HepG2 (cell line): ENCODE measurements at regions of chr2 and their contacts with region 1.

Region 1: GRCh38 chr2:128520791-128521190 is 202.1 kb upstream of the HS6ST1 start:
- DNase-seq: no peak
- ATAC-seq: peak; percentile 33
- H3K4me3 ChIP-seq: no peak overlapping the region
- H3K27ac ChIP-seq: no peak overlapping the region
- H3K4me1 ChIP-seq: no peaks in the 10 kb centered on the region
- H3K27me3 ChIP-seq: peaks cover 3 to 34% of the 10 kb centered on the region in 2 experiments; a peak in 3 of 5 replicates
- CTCF ChIP-seq: no peak
- EP300 ChIP-seq: no peak
- POLR2A ChIP-seq: no peak
- RAD21 ChIP-seq: no peak

Region 2: GRCh38 chr2:127231130-127231865 is 1289.5 kb before region 1 on chr2:
- CTCF ChIA-PET with region 1: no interaction called
- POLR2A ChIA-PET with region 1: no interaction called
- in situ Hi-C with region 1: no loop called
- intact Hi-C with region 1: loop called (anchors 5 kb)
- DNase-seq: peak; percentile 70
- ATAC-seq: peak; percentile 98
- H3K4me3 ChIP-seq: no peak overlapping the region
- H3K27ac ChIP-seq: no peak overlapping the region
- H3K4me1 ChIP-seq: peaks cover 22% of the 10 kb centered on the region
- H3K27me3 ChIP-seq: peaks cover 0 to 4% of the 10 kb centered on the region in 2 experiments; a peak in 3 of 5 replicates
- CTCF ChIP-seq: no peak
- EP300 ChIP-seq: no peak
- POLR2A ChIP-seq: no peak
- RAD21 ChIP-seq: no peak

Region 3: DNA sequence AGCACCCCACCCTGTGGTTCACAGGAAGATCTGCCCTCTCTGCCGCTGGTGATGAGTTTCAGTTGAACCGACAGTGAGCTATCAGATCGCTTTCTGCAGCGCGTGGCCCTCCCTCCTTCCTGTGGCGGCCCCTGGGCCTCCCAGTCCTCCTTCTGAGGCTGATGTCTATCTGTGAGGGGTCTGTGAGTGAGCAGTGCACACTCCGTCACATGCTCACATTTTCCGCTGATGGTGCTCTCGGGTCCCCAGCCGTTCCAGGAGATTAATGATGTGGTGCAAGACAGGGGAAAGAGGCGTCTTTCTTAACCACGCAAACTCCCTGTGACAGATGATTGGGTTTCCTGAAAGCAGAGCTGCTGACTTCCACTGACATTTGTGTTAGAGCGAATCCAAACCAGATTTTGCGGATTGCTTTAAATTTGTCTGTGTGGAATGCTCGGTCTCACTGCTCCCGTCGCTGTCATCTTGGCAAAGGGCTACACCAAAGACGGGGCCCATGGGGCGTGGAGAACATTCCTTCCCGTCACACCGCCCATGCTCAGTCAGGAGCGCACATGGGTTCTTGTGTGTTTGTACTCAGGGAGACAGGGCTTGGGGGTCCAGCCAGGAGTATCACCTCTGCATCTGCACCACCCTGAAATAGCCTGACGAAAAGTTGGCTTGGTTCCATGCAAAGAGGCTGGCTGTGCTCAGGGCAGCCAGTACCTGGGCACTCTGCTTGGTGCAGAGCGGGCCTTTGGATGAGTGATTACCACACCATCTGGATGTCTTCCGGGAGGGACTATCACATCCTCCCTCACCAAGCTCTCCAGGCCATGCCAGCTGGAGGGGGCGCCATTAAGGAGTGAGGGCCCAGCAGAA is 47.4 kb before region 1 on chr2:
- CTCF ChIA-PET with region 1: no interaction called
- POLR2A ChIA-PET with region 1: no interaction called
- in situ Hi-C with region 1: no loop called
- intact Hi-C with region 1: no loop called
- DNase-seq: no peak
- ATAC-seq: no peak
- H3K4me3 ChIP-seq: no peak overlapping the region
- H3K27ac ChIP-seq: no peak overlapping the region
- H3K4me1 ChIP-seq: no peaks in the 10 kb centered on the region
- H3K27me3 ChIP-seq: no peaks in the 10 kb centered on the region; a peak in 1 of 5 replicates
- CTCF ChIP-seq: no peak
- EP300 ChIP-seq: no peak
- POLR2A ChIP-seq: no peak
- RAD21 ChIP-seq: no peak

Region 4: DNA sequence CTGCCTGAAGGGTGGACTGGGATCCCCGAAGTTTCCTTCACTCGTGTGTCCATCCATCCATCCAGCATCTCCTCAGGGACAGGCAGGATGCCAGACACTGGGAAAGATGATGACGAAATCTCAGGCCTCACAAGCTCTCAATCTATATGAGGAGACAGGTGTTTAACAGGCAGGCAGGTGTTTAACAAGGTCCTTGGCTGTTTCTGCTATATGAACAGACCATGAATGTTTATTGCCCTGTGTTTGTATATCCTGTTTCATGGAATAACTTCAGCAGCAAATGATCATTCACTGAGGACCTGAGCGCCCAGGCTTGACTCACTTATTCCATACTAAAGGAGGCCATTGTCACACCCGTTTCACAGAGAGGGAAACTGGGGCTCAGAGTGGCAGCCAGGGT is 483.7 kb after region 1 on chr2:
- CTCF ChIA-PET with region 1: no interaction called
- POLR2A ChIA-PET with region 1: no interaction called
- in situ Hi-C with region 1: no loop called
- intact Hi-C with region 1: loop called (anchors 5 kb)
- DNase-seq: no peak
- ATAC-seq: no peak
- H3K4me3 ChIP-seq: no peak overlapping the region
- H3K27ac ChIP-seq: no peak overlapping the region
- H3K4me1 ChIP-seq: no peaks in the 10 kb centered on the region
- H3K27me3 ChIP-seq: peaks cover 0 to 13% of the 10 kb centered on the region in 2 experiments; a peak in 3 of 5 replicates
- CTCF ChIP-seq: no peak
- EP300 ChIP-seq: no peak
- POLR2A ChIP-seq: no peak
- RAD21 ChIP-seq: no peak